Gastrocnemius medialis (tissue), 4 donors: ENCODE measurements at regions of chr6 and their contacts with region 1.

Region 1: DNA sequence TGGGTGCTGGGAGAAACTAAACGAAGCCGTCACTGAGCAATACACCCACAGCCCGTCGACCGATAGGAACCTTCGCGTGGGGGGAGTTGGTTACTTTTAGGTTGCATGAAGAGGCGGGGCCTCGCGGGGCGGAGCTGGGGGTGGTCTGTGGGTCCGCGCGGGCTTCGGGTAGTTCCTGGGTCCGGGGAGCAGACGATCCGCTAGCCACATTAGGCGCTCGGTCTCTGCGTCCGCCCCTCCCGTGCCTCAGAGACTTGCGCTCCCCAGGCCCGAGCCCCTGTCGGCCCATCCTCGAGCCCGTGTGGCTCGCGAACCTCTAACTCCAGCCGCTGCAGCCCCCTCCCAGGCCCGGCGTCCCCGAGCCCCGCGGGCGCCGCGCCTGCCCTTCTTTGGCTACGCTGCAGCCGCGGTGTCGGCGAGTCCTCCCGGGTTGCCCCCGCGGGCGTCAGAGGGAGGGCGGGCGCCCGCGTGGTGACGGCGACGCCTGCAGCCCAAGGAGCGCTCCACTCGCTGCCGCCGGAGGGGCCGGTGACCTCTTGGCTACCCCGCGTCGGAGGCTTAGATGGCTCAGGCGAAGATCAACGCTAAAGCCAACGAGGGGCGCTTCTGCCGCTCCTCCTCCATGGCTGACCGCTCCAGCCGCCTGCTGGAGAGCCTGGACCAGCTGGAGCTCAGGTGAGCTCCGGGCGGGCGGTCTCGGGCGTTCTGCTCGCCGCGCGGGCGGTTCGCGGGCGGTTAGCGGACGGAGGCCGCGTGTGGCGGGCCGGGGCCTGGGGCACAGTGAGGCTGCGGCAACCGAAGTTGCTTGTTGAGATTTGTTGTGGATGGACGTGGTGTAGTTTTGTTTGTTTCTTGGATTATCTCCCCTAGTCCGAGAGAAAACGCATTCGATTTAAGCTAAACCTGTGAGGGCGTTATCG is at the start of gene BAG2:
- DNase-seq: peak; percentile 68 to 88
- ATAC-seq: peak; percentile 88 to 90
- H3K4me3 ChIP-seq: peak within 1 kb of the TSS; percentile 79 to 88 (median 82)
- H3K27ac ChIP-seq: peak within 1 kb of the TSS; percentile 90 to 95 (median 92)
- H3K4me1 ChIP-seq: peaks cover 38 to 41% of the 10 kb centered on the region in 2 donors
- H3K27me3 ChIP-seq: no peaks in the 10 kb centered on the region
- CTCF ChIP-seq: peak in 2 of 5 experiments; percentile 28 to 38
- POLR2A ChIP-seq: peak; percentile 64 to 75
- total RNA-seq, gene BAG2: 6.7 to 15.7 (median 9.8) TPM

Region 2: GRCh38 chr6:56618050-56618449 is 554.3 kb before region 1 on chr6:
- in situ Hi-C with region 1: no loop called
- intact Hi-C with region 1: no loop called
- DNase-seq: no peak
- ATAC-seq: no peak
- H3K4me3 ChIP-seq: no peak overlapping the region
- H3K27ac ChIP-seq: no peak overlapping the region
- H3K4me1 ChIP-seq: no peaks in the 10 kb centered on the region
- H3K27me3 ChIP-seq: no peaks in the 10 kb centered on the region
- CTCF ChIP-seq: no peak
- POLR2A ChIP-seq: no peak

Region 3: GRCh38 chr6:56699066-56699654 is 473.2 kb before region 1 on chr6:
- in situ Hi-C with region 1: no loop called
- intact Hi-C with region 1: loop called (anchors 10 kb)
- DNase-seq: no peak
- ATAC-seq: peak; percentile 44 to 68
- H3K4me3 ChIP-seq: no peak overlapping the region
- H3K27ac ChIP-seq: peak overlapping the region in 1 of 4 donors; percentile 89
- H3K4me1 ChIP-seq: peaks cover 14 to 19% of the 10 kb centered on the region in 2 donors
- H3K27me3 ChIP-seq: no peaks in the 10 kb centered on the region
- CTCF ChIP-seq: peak; percentile 55 to 79 (median 65)
- POLR2A ChIP-seq: no peak

Region 4: GRCh38 chr6:57267586-57268293 is 95.3 kb after region 1 on chr6:
- in situ Hi-C with region 1: no loop called
- intact Hi-C with region 1: loop called (anchors 5 kb)
- DNase-seq: no peak
- ATAC-seq: peak; percentile 75 to 87
- H3K4me3 ChIP-seq: no peak overlapping the region
- H3K27ac ChIP-seq: no peak overlapping the region
- H3K4me1 ChIP-seq: peaks cover 9 to 10% of the 10 kb centered on the region in 2 donors
- H3K27me3 ChIP-seq: no peaks in the 10 kb centered on the region
- CTCF ChIP-seq: no peak
- POLR2A ChIP-seq: no peak